ENCODE measurements at regions of chr16 and their contacts with region 1.

Region 1: GRCh38 chr16:88561485-88562369 is 8.5 kb upstream of the ZC3H18 start:
- DNase-seq: peak; percentile 42
- H3K4me3 ChIP-seq: no peak overlapping the region
- H3K27ac ChIP-seq: no peak overlapping the region
- H3K4me1 ChIP-seq: no peaks in the 10 kb centered on the region
- H3K27me3 ChIP-seq: no peaks in the 10 kb centered on the region
- CTCF ChIP-seq: peak; percentile 2 to 77
- POLR2A ChIP-seq: no peak

Region 2: DNA sequence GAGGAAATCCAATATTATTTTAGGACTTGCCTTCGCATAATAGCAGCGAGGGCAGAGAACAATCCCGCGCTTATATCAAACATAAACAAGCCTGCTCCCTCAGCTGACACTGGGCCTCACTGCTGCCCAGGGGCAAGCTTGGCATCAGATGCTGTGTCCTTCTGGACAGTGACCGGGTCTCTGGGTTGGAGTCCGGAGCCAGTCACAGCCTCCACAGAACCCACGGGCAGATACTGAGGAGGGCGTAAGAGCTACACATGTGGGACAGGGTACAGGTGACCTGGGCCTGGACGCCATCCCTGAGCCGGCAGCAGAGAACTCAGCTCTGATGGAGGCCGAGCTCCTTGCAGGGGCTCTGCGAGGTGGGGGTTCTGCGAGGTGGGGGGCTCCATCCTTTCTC is 193.7 kb before region 1 on chr16:
- CTCF ChIA-PET with region 1: no interaction called
- POLR2A ChIA-PET with region 1: no interaction called
- dilution Hi-C with region 1: no loop called
- intact Hi-C with region 1: no loop called
- DNase-seq: peak; percentile 29
- H3K4me3 ChIP-seq: no peak overlapping the region
- H3K27ac ChIP-seq: no peak overlapping the region
- H3K4me1 ChIP-seq: no peaks in the 10 kb centered on the region
- H3K27me3 ChIP-seq: peaks cover 5 to 8% of the 10 kb centered on the region in 2 experiments
- CTCF ChIP-seq: no peak
- POLR2A ChIP-seq: no peak

Region 3: DNA sequence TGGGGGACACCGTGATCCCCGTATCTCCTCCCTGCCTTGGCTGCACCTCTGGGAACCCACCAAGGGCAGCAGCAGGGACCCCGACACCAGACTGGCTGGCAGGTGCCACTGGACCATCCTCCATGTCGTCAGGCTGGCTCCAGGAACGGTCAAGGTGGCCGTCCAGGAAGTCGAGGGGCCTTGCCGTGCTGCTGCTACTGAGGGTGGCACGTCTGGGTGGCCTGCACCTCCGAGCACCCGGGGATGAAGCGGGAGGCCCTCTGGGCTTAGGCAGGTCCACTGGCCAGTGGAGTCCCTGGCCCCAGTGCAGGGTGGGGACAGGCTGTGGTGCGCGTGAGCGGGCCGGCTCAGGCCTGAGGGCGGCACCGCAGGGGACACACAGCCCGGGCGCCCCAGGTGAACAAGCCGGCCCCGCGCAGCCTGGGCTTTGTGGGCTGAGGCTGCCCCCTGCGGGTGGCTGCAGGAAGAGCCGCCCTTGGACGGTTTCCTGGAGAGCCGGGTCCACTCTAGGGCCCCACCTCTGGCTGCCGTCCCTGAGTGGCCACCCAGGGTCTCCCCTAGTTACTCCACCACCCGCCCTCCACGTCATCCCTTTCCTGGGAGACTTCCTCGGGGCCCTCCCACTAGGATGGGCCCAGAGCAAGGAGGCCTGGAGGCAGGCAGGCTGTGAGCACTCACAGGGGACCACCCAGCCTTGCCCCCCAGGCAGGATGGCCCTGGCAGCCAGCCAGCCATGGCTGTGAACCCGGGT is 34.4 kb before region 1 on chr16:
- CTCF ChIA-PET with region 1: no interaction called
- POLR2A ChIA-PET with region 1: no interaction called
- dilution Hi-C with region 1: no loop called
- intact Hi-C with region 1: loop called (anchors 2 kb)
- DNase-seq: peak; percentile 45
- H3K4me3 ChIP-seq: no peak overlapping the region
- H3K27ac ChIP-seq: no peak overlapping the region
- H3K4me1 ChIP-seq: peaks cover 20% of the 10 kb centered on the region
- H3K27me3 ChIP-seq: no peaks in the 10 kb centered on the region
- CTCF ChIP-seq: peak; percentile 88 to 98
- POLR2A ChIP-seq: no peak

Region 4: DNA sequence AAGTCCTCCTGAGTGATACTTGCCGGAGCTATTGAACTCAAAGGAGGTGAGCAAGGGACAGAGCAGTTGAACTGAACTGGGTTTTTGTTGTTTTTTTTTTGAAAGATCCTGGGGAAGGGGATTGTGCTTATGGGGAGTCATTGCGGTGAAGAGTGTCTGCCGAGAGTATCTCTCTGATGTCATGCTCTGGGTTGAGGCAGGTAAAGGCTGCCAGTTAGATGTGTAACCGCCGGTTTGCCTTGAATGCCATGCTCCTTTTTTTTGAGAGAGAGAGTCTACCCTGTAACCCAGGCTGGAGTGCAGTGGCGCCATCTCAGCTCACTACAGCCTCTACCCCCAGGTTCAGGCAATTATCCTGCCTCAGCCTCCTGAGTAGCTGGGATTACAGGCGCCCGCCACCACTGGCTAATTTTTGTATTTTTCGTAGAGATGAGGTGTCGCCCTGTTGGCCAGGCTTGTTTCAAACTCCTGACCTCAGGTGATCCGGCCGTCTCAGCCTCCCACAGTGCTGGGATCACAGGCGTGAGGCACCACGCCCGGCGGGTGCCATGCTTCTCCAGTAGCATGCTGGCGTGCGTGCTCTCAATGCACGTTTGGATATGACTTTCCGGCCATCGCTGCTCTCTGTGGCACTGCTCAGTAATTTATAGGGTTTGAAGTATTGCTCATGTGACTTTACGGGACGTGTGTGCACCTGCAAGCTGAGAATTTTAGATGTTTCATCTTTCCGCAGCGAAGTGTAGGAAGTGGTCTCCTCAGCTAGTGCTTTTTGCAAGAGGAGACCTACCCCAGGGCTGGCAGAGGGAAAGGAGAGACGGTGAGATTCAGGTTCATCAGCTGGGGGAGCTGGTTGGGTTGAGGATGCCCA is 17.0 kb after region 1 on chr16:
- CTCF ChIA-PET with region 1: no interaction called
- POLR2A ChIA-PET with region 1: no interaction called
- dilution Hi-C with region 1: no loop called
- intact Hi-C with region 1: no loop called
- DNase-seq: no peak
- H3K4me3 ChIP-seq: no peak overlapping the region
- H3K27ac ChIP-seq: no peak overlapping the region
- H3K4me1 ChIP-seq: no peaks in the 10 kb centered on the region
- H3K27me3 ChIP-seq: no peaks in the 10 kb centered on the region
- CTCF ChIP-seq: no peak
- POLR2A ChIP-seq: no peak